Activated B cell treated with CpG ODN at 0.5 μM for 24 hours (primary cell): ENCODE measurements at regions of chrX and their contacts with region 1.

Region 1: GRCh38 chrX:38080808-38081207 is 74.5 kb downstream of the SYTL5 start:
- DNase-seq: no peak
- ATAC-seq: no peak
- H3K4me3 Mint-ChIP-seq: no peak overlapping the region
- H3K27ac Mint-ChIP-seq: no peak overlapping the region
- H3K4me1 Mint-ChIP-seq: no peaks in the 10 kb centered on the region
- H3K27me3 Mint-ChIP-seq: no peaks in the 10 kb centered on the region
- CTCF ChIP-seq: no peak

Region 2: GRCh38 chrX:38108364-38108763 is 27.6 kb after region 1 on chrX:
- CTCF ChIA-PET with region 1: no interaction called
- POLR2A ChIA-PET with region 1: no interaction called
- intact Hi-C with region 1: loop called (anchors 1 kb)
- DNase-seq: no peak
- ATAC-seq: no peak
- H3K4me3 Mint-ChIP-seq: no peak overlapping the region
- H3K27ac Mint-ChIP-seq: no peak overlapping the region
- H3K4me1 Mint-ChIP-seq: peaks cover 2% of the 10 kb centered on the region
- H3K27me3 Mint-ChIP-seq: peaks cover 1% of the 10 kb centered on the region
- CTCF ChIP-seq: no peak

Region 3: GRCh38 chrX:38249965-38250364 is 169.2 kb after region 1 on chrX:
- CTCF ChIA-PET with region 1: no interaction called
- POLR2A ChIA-PET with region 1: no interaction called
- intact Hi-C with region 1: no loop called
- DNase-seq: no peak
- ATAC-seq: no peak
- H3K4me3 Mint-ChIP-seq: no peak overlapping the region
- H3K27ac Mint-ChIP-seq: no peak overlapping the region
- H3K4me1 Mint-ChIP-seq: no peaks in the 10 kb centered on the region
- H3K27me3 Mint-ChIP-seq: peaks cover 2% of the 10 kb centered on the region
- CTCF ChIP-seq: no peak